ENCODE measurements at regions of chr10 and their contacts with region 1.

Region 1: GRCh38 chr10:87694011-87694794 is 34.5 kb downstream of the PAPSS2 start:
- DNase-seq: no peak
- H3K4me3 ChIP-seq: no peak overlapping the region
- H3K27ac ChIP-seq: no peak overlapping the region
- H3K4me1 ChIP-seq: no peaks in the 10 kb centered on the region
- H3K27me3 ChIP-seq: no peaks in the 10 kb centered on the region
- CTCF ChIP-seq: no peak

Region 2: DNA sequence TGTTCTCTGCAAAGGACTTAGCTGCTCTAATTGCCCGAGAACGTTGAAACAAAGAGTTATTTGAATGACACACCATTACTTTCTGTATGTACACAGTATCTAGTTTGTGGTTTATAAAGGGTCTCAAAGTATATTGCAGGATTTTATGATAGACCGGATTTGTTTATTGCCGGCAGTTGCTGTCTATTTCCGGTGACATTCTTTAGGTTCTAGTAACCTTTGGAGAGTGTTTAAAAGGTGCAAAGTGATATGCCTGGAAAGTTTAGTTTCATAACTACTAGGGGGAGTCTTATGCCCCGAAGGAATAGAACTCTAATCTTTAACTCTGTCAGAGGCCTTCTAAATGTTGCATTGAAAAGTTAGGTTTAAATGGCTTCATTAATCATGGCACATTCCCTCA is 29.3 kb after region 1 on chr10:
- CTCF ChIA-PET with region 1: no interaction called
- POLR2A ChIA-PET with region 1: no interaction called
- intact Hi-C with region 1: no loop called
- DNase-seq: peak; percentile 29
- H3K4me3 ChIP-seq: no peak overlapping the region
- H3K27ac ChIP-seq: no peak overlapping the region
- H3K4me1 ChIP-seq: no peaks in the 10 kb centered on the region
- H3K27me3 ChIP-seq: no peaks in the 10 kb centered on the region
- CTCF ChIP-seq: no peak

Region 3: DNA sequence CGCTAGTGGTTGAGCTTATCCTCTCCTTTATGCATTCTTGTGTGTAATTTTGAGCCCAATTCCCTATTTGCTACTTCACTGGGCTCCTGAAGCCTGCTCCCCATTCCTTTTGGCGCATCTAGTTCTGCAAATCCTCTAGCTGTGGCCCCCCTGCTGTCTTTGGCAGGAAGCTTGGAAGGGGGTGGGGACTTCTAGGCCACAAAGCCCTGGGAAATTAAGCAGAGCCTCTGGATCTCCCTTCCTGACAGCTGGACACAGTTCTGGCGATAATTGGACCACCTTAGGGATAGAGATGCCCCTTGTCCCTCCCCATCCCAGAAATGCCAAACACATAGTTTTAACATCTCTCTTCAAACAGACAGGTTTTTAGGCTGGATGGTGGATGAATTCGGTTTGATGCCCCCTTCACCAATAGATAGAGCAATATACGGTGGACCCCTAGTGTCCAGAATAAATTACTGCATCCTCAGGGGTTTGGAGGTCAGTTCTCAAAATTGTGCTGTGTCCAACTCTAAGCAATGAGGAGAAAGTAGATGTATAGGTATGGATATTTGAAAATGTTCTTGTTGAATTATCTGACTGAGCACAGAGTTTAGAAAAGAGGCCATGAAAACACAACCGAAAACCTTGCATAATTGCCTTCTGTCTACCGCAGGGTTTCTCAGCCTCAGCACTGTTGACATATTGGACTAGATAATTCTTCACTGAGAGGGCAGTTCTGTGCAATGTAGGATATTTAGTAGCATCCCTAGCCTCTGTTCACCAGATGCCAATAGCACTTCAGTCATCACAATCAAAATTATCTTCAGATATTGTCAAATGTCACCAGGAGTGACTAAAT is 41.0 kb after region 1 on chr10:
- CTCF ChIA-PET with region 1: interaction called, 11 read pairs
- POLR2A ChIA-PET with region 1: no interaction called
- intact Hi-C with region 1: no loop called
- DNase-seq: peak; percentile 87
- H3K4me3 ChIP-seq: peak overlapping the region; percentile 16
- H3K27ac ChIP-seq: no peak overlapping the region
- H3K4me1 ChIP-seq: peaks cover 6% of the 10 kb centered on the region
- H3K27me3 ChIP-seq: no peaks in the 10 kb centered on the region
- CTCF ChIP-seq: peak; percentile 77

Region 4: DNA sequence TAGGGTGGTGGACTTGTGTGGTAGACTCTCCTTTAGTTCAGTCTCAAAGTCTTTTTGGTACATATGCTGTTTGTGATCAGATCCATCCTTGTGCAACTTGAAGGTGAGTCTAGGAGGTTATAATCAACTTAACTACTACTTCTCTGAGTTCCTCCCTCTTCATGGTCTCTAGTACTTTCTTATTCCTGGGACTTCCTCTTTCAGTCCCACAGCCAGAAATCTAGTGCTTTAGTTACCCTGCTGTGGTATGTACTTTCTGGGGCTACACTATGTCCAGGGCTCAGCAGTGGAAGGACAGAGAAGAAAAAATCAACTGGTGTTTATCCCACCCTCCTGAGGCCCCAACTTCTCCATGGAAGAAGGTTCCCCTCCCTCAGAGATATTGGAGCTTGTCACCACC is 143.2 kb after region 1 on chr10:
- CTCF ChIA-PET with region 1: no interaction called
- POLR2A ChIA-PET with region 1: no interaction called
- intact Hi-C with region 1: no loop called
- DNase-seq: no peak
- H3K4me3 ChIP-seq: no peak overlapping the region
- H3K27ac ChIP-seq: no peak overlapping the region
- H3K4me1 ChIP-seq: no peaks in the 10 kb centered on the region
- H3K27me3 ChIP-seq: peaks cover 7% of the 10 kb centered on the region
- CTCF ChIP-seq: no peak